OCI-LY7 (cell line): ENCODE measurements at regions of chr7 and their contacts with region 1.

Region 1: DNA sequence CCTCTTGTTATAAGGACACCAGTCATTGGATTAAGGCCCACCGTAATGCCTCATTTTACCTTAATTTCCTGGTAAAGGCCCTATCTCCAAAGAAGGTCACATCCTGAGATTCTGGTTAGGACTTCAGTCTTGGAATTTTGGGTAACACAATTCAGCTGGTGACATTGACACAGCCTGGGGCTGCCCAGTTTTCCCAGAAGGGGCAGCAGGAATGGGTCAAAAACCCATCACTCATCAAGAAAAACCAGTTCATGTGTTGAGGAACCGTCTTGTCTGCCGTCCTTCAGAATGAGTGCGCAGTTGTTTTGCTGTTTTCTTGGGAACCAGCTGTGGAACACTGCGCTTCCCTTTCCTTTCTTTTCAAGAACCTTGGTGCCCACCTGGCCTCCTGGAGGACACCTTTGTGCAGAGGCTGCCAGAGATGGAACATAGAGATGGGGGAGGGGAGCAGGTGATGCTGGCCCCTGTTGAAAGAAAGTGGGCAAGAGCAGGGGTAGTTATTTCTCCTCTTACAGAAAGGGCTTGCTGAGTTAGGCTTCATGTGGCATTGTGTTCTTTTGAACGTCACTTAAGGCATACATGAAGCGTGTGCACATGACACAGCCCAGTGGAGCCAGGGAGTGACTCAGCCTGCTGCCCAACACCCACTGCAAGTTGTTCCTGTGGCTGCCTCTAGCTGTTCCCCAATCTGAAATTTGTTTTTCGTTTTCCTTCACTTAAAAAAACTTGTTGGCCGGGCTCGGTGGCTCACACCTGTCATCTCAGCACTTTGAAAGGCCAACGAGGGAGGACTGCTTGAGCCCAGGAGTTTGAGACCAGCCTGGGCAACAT is 87.4 kb upstream of the TNS3 start:
- DNase-seq: peak; percentile 91
- H3K4me3 ChIP-seq: peak overlapping the region; percentile 14
- H3K27ac ChIP-seq: peak overlapping the region; percentile 95
- H3K4me1 ChIP-seq: peaks cover 62% of the 10 kb centered on the region
- CTCF ChIP-seq: peak; percentile 27; the same call in 1 of the 2 replicates

Region 2: GRCh38 chr7:47482013-47482875 is 187.0 kb before region 1 on chr7:
- CTCF ChIA-PET with region 1: no interaction called
- POLR2A ChIA-PET with region 1: interaction called, 3 read pairs
- intact Hi-C with region 1: loop called (anchors 1 kb)
- DNase-seq: no peak
- H3K4me3 ChIP-seq: no peak overlapping the region
- H3K27ac ChIP-seq: no peak overlapping the region
- H3K4me1 ChIP-seq: peaks cover 33% of the 10 kb centered on the region
- CTCF ChIP-seq: no peak

Region 3: GRCh38 chr7:47581806-47582763 is 87.2 kb before region 1 on chr7 and contains the start of gene TNS3:
- CTCF ChIA-PET with region 1: no interaction called
- POLR2A ChIA-PET with region 1: interaction called, 5 read pairs
- intact Hi-C with region 1: loop called (anchors 2 kb)
- DNase-seq: peak; percentile 71
- H3K4me3 ChIP-seq: peak within 1 kb of the TSS; percentile 87
- H3K27ac ChIP-seq: peak within 1 kb of the TSS; percentile 16
- H3K4me1 ChIP-seq: peaks cover 61% of the 10 kb centered on the region
- CTCF ChIP-seq: peak; percentile 41; the same call in 1 of the 2 replicates
- total RNA-seq, gene TNS3: 8.3 and 9.5 TPM in 2 replicates

Region 4: GRCh38 chr7:47622946-47623640 is 46.2 kb before region 1 on chr7:
- CTCF ChIA-PET with region 1: no interaction called
- POLR2A ChIA-PET with region 1: interaction called, 14 read pairs
- intact Hi-C with region 1: loop called (anchors 2 kb)
- DNase-seq: no peak
- H3K4me3 ChIP-seq: peak overlapping the region; percentile 46
- H3K27ac ChIP-seq: peak overlapping the region; percentile 55
- H3K4me1 ChIP-seq: peaks cover 79% of the 10 kb centered on the region
- CTCF ChIP-seq: no peak

Region 5: GRCh38 chr7:47702080-47702479 is 32.8 kb after region 1 on chr7:
- CTCF ChIA-PET with region 1: no interaction called
- POLR2A ChIA-PET with region 1: no interaction called
- intact Hi-C with region 1: no loop called
- DNase-seq: no peak
- H3K4me3 ChIP-seq: no peak overlapping the region
- H3K27ac ChIP-seq: no peak overlapping the region
- H3K4me1 ChIP-seq: no peaks in the 10 kb centered on the region
- CTCF ChIP-seq: no peak

Region 6: DNA sequence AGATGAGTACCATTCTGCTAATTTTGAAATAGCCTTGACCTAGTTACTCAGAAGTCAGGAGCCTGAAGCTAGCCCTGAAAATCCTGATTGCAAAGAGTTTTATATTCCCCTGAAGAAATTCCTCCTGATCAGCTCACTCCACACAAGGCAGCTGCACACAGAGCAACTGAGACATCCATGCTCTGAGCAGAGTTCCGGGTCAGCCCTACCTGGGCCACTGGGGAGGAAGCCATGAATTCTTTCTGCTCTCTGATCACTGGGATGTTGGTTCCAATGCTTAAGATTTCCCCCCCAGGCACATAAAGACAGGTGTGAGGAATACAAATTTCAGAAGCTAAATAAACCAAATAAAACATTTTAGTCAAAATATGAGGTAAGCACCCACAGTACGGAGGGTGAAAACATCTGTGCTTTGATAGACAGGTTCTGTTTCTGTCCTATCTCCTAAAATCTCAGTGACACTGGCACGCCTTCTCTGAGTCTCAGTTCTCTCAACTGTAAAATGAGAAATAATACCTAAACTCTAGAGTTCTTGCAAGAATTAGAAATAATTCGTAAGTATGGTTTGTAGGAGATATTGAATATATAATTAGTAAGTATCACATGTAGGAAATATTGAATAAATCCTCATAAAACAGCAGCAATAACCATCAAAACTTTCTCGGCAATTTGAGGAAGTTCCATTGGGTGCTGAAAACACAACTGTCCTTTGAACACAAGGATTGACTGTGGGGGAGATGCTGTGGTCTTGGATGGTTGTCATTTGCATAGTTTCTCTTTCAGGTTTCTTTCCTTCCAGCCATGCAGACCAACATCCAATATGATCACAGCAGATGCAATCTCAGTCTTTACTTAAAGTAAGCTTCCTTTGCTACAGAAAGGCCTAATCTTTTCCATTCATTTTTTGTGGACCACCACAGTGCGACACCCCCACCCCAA is 45.7 kb after region 1 on chr7:
- CTCF ChIA-PET with region 1: no interaction called
- POLR2A ChIA-PET with region 1: interaction called, 10 read pairs
- intact Hi-C with region 1: loop called (anchors 1 kb)
- DNase-seq: peak; percentile 81
- H3K4me3 ChIP-seq: peak overlapping the region; percentile 41
- H3K27ac ChIP-seq: peak overlapping the region; percentile 95
- H3K4me1 ChIP-seq: peaks cover 81% of the 10 kb centered on the region
- CTCF ChIP-seq: no peak

Region 7: GRCh38 chr7:47807756-47808155 is 138.5 kb after region 1 on chr7:
- CTCF ChIA-PET with region 1: no interaction called
- POLR2A ChIA-PET with region 1: interaction called, 6 read pairs
- intact Hi-C with region 1: loop called (anchors 2 kb)
- DNase-seq: peak; percentile 57
- H3K4me3 ChIP-seq: no peak overlapping the region
- H3K27ac ChIP-seq: no peak overlapping the region
- H3K4me1 ChIP-seq: peaks cover 11% of the 10 kb centered on the region
- CTCF ChIP-seq: peak; percentile 67